ENCODE measurements at regions of chr10 and their contacts with region 1.

Region 1: GRCh38 chr10:16828114-16828568 is 10.9 kb upstream of the RSU1 start:
- DNase-seq: peak; percentile 81
- ATAC-seq: peak; percentile 86
- H3K4me3 ChIP-seq: no peak overlapping the region
- H3K4me3 Mint-ChIP-seq: no peak overlapping the region
- H3K27ac ChIP-seq: no peak overlapping the region
- H3K27ac Mint-ChIP-seq: no peak overlapping the region
- H3K4me1 ChIP-seq: peaks cover 0 to 4% of the 10 kb centered on the region in 2 donors
- H3K4me1 Mint-ChIP-seq: peaks cover 6% of the 10 kb centered on the region
- H3K27me3 ChIP-seq: peaks cover 0 to 5% (median 0%) of the 10 kb centered on the region in 4 experiments
- H3K27me3 Mint-ChIP-seq: peaks cover 4% of the 10 kb centered on the region
- CTCF ChIP-seq: peak; percentile 74

Region 2: GRCh38 chr10:16756561-16757222 is 71.4 kb before region 1 on chr10:
- CTCF ChIA-PET with region 1: no interaction called
- POLR2A ChIA-PET with region 1: no interaction called
- intact Hi-C with region 1: no loop called
- DNase-seq: no peak
- ATAC-seq: no peak
- H3K4me3 ChIP-seq: no peak overlapping the region
- H3K4me3 Mint-ChIP-seq: no peak overlapping the region
- H3K27ac ChIP-seq: no peak overlapping the region
- H3K27ac Mint-ChIP-seq: no peak overlapping the region
- H3K4me1 ChIP-seq: no peaks in the 10 kb centered on the region
- H3K4me1 Mint-ChIP-seq: no peaks in the 10 kb centered on the region
- H3K27me3 ChIP-seq: no peaks in the 10 kb centered on the region
- H3K27me3 Mint-ChIP-seq: no peaks in the 10 kb centered on the region
- CTCF ChIP-seq: no peak

Region 3: DNA sequence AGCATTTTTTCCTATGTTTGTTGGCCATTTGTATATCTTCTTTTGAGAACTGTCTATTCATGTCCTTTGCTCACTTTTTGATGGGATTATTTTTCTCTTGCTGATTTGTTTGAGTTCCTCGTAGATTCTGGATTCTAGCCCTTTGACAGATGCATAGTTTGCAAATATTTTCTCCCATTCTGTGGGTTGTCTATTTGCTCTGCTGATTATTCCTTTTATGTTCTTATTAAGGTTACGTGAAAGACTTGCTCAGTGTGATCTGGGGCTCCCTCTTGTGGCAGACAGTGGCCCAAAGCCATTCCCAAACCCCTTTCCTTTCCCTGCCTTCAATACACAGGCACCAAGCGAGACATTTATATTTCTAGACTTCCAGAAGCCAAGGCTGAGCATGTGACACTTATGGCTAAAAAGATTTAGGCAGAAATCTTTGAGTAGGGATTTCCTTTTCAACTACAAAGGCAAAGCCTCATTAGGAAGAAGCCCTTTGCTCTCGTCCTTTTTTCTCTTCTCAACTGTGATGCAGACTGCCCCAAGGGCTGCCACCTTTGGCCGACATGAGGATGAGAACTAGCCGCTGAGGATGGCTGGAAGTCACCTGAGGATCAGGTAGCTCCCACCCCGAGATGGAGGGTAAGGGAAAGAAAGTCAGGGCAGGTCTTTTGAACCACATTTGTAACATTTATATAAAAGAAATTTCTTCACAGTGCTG is 602.7 kb after region 1 on chr10:
- CTCF ChIA-PET with region 1: interaction called, 4 read pairs
- POLR2A ChIA-PET with region 1: no interaction called
- intact Hi-C with region 1: loop called (anchors 1 kb)
- DNase-seq: peak; percentile 60
- ATAC-seq: peak; percentile 47
- H3K4me3 ChIP-seq: no peak overlapping the region
- H3K4me3 Mint-ChIP-seq: peak overlapping the region; percentile 10
- H3K27ac ChIP-seq: no peak overlapping the region
- H3K27ac Mint-ChIP-seq: no peak overlapping the region
- H3K4me1 ChIP-seq: peaks cover 34 to 36% of the 10 kb centered on the region in 2 donors
- H3K4me1 Mint-ChIP-seq: peaks cover 44% of the 10 kb centered on the region
- H3K27me3 ChIP-seq: peaks cover 0 to 18% (median 8%) of the 10 kb centered on the region in 4 experiments
- H3K27me3 Mint-ChIP-seq: peaks cover 34% of the 10 kb centered on the region
- CTCF ChIP-seq: peak; percentile 85

Region 4: GRCh38 chr10:17742918-17743317 is 914.8 kb after region 1 on chr10:
- CTCF ChIA-PET with region 1: no interaction called
- POLR2A ChIA-PET with region 1: no interaction called
- intact Hi-C with region 1: loop called (anchors 2 kb)
- DNase-seq: peak; percentile 64
- ATAC-seq: peak; percentile 63
- H3K4me3 ChIP-seq: no peak overlapping the region
- H3K4me3 Mint-ChIP-seq: no peak overlapping the region
- H3K27ac ChIP-seq: no peak overlapping the region
- H3K27ac Mint-ChIP-seq: no peak overlapping the region
- H3K4me1 ChIP-seq: no peaks in the 10 kb centered on the region
- H3K4me1 Mint-ChIP-seq: peaks cover 7% of the 10 kb centered on the region
- H3K27me3 ChIP-seq: no peaks in the 10 kb centered on the region
- H3K27me3 Mint-ChIP-seq: no peaks in the 10 kb centered on the region
- CTCF ChIP-seq: peak; percentile 90

Measured in B cell (primary cell).